ENCODE measurements at regions of chr6 and their contacts with region 1.

Region 1: GRCh38 chr6:72669324-72669723 is 47.5 kb downstream of the KCNQ5 start:
- DNase-seq: no peak
- ATAC-seq: no peak
- H3K4me3 ChIP-seq: no peak overlapping the region
- H3K4me3 Mint-ChIP-seq: no peak overlapping the region
- H3K27ac ChIP-seq: no peak overlapping the region
- H3K27ac Mint-ChIP-seq: no peak overlapping the region
- H3K4me1 ChIP-seq: peaks cover 0 to 4% of the 10 kb centered on the region in 2 donors
- H3K4me1 Mint-ChIP-seq: peaks cover 7% of the 10 kb centered on the region
- H3K27me3 ChIP-seq: no peaks in the 10 kb centered on the region
- H3K27me3 Mint-ChIP-seq: no peaks in the 10 kb centered on the region
- CTCF ChIP-seq: no peak

Region 2: GRCh38 chr6:71822626-71823025 is 846.7 kb before region 1 on chr6:
- CTCF ChIA-PET with region 1: no interaction called
- POLR2A ChIA-PET with region 1: no interaction called
- intact Hi-C with region 1: no loop called
- DNase-seq: no peak
- ATAC-seq: no peak
- H3K4me3 ChIP-seq: no peak overlapping the region
- H3K4me3 Mint-ChIP-seq: no peak overlapping the region
- H3K27ac ChIP-seq: no peak overlapping the region
- H3K27ac Mint-ChIP-seq: no peak overlapping the region
- H3K4me1 ChIP-seq: no peaks in the 10 kb centered on the region
- H3K4me1 Mint-ChIP-seq: no peaks in the 10 kb centered on the region
- H3K27me3 ChIP-seq: no peaks in the 10 kb centered on the region
- H3K27me3 Mint-ChIP-seq: no peaks in the 10 kb centered on the region
- CTCF ChIP-seq: no peak

Region 3: GRCh38 chr6:72654071-72654621 is 15.2 kb before region 1 on chr6:
- CTCF ChIA-PET with region 1: interaction called, 4 read pairs
- POLR2A ChIA-PET with region 1: no interaction called
- intact Hi-C with region 1: loop called (anchors 2 kb)
- DNase-seq: peak; percentile 22
- ATAC-seq: peak; percentile 39
- H3K4me3 ChIP-seq: no peak overlapping the region
- H3K4me3 Mint-ChIP-seq: no peak overlapping the region
- H3K27ac ChIP-seq: no peak overlapping the region
- H3K27ac Mint-ChIP-seq: no peak overlapping the region
- H3K4me1 ChIP-seq: peaks cover 6 to 21% of the 10 kb centered on the region in 2 donors
- H3K4me1 Mint-ChIP-seq: peaks cover 34% of the 10 kb centered on the region
- H3K27me3 ChIP-seq: no peaks in the 10 kb centered on the region
- H3K27me3 Mint-ChIP-seq: no peaks in the 10 kb centered on the region
- CTCF ChIP-seq: no peak